Posterior vena cava (tissue), 2 donors: ENCODE measurements at regions of chr20 and their contacts with region 1.

Region 1: DNA sequence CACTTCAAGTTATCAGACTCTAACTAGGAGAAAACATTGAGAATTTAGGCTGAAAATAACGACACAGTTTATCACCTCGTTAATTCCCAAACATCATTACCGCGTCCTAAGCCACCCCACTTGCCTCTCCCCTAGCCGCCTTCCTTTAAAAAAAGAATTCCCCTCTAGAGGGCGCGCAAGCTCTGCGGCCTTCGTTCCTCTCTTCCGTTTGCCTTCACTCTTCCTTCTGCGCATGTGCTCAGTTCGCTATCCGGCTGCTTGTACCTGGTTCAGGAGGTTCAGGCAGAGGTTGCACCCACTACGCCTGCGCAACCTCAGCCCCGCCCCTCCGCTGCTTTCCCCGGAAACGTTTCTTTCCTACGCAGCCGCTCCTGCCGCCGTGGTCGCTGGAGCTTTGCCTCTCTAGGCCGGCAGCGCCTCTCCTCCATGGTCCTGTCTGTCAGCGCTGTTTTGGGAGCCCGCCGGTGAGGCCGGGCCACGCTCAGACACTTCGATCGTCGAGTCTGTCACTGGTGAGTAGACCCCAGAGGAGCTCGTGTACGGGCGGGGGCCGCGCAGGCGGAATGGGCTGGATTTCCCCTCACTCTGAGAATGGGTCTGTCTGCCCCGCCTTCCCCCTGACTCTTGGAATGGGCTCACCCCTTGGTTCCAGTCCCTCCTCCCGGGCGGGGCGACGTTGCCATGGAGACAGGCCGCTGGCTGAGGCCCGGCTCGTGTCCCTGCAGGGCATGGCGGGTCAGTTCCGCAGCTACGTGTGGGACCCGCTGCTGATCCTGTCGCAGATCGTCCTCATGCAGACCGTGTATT is at the start of gene SYS1:
- DNase-seq: peak; percentile 99
- total RNA-seq, gene SYS1: 21.8 to 22.6 TPM

Region 2: DNA sequence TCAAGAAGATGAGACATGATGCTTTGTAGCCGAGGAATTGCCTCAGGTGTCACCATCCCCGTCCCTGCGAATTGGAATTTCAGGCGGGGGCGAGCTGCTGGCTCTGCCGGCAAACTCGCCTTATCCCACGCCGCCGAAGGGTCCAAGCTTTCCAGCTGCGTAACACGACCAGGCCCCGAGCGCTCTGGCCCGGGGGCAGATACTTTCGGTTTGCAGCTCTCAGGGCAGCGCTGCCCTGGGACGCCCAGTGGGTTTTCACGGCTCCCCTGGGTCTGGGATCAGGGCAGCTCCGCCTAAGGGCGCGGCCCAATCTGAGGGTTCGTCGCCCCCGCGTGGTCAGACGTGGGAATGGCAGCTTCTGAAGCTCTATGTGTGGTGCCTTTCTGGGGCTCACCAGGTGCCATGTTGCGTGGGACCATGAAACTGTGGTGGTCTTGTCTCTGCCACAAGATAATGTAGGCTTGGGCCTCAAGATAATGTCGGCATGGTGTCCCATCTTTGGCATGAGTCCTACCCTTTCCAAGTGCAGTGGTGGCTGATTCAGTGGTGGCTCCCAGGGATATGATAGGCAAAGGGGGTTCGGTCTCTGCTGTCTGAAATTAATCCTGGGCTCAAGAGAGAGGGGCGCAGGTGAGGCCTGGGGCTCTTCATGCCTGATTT is 73.9 kb after region 1 on chr20:
- intact Hi-C with region 1: loop called in 1 of 2 experiments (anchors 5 kb)
- DNase-seq: peak; percentile 97